Psoas muscle (tissue), 8 donors: ENCODE measurements at regions of chr10 and their contacts with region 1.

Region 1: DNA sequence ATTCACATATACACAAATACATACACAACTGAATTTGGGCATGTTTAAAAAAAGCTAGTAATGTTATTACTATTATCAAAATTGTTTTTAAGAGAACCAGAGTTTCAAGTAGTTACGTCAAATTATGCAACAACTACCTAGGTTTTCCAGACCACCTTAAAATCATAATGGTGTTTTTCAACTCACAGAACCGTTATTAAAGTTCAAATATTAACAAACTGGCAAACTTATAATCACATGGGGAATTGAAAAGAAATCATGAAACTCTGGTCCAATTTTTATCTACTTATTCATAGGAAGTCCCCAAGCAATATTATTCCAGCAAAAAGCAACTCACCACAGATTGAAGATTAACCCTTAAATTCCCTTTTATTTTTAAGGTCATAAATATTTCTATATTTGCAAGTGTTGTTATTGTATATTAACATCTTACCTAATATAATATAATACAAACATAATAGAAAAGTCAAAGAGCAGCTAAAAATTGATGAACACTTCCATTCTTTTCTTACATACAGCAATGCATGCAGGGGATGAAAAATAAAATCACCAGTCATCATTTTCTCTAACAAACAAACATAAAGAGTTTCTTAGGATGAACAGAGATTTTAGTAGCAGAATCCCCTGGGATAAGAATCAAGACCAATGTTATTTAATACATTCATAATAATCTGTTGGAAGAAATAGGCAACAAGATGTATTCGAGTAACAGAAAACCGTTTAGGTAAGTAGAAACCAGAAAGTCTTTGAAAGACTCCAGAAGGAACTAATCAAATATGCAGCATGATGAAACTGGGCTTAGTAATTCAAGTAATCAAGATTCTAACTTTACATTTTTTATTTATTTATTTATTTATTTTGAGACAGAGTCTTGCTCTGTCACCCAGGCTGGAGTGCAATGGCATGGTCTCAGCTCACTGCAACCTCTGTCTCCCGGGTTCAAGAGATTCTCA is 391.1 kb downstream of the PARD3 start:
- DNase-seq: no peak
- ATAC-seq: no peak
- H3K4me3 ChIP-seq: no peak overlapping the region
- H3K27ac ChIP-seq: no peak overlapping the region
- H3K4me1 ChIP-seq: no peaks in the 10 kb centered on the region
- H3K27me3 ChIP-seq: no peaks in the 10 kb centered on the region
- CTCF ChIP-seq: no peak

Region 2: GRCh38 chr10:34333513-34333912 is 90.4 kb before region 1 on chr10:
- intact Hi-C with region 1: loop called in 1 of 2 experiments (anchors 10 kb)
- DNase-seq: no peak
- ATAC-seq: no peak
- H3K4me3 ChIP-seq: no peak overlapping the region
- H3K27ac ChIP-seq: no peak overlapping the region
- H3K4me1 ChIP-seq: no peaks in the 10 kb centered on the region
- H3K27me3 ChIP-seq: no peaks in the 10 kb centered on the region
- CTCF ChIP-seq: no peak

Region 3: DNA sequence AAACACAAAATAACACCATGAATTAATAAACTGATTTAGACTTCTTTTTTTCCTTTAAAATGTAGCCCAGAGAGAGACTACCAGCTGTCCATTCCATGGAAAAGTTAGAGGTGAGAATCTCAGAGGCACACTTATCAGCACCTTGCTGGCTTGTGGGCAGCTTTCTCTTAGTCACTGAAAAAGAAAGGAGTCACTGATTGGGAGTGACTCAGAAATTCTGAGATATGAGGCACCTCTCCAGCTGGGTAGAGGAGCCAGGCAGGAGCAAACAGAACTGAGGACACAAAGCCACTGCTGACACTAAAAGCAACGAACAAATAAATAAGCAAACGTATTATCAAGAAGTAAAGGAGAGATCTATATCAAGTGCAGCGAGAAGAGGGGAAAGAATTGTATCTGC is 80.6 kb after region 1 on chr10:
- intact Hi-C with region 1: no loop called
- DNase-seq: no peak
- ATAC-seq: peak; percentile 88 to 95 (median 93)
- H3K4me3 ChIP-seq: no peak overlapping the region
- H3K27ac ChIP-seq: no peak overlapping the region
- H3K4me1 ChIP-seq: peaks cover 10% of the 10 kb centered on the region
- H3K27me3 ChIP-seq: no peaks in the 10 kb centered on the region
- CTCF ChIP-seq: no peak